CD8-positive, alpha-beta T cell (primary cell): ENCODE measurements at regions of chr19 and their contacts with region 1.

Region 1: GRCh38 chr19:7925171-7925851 is 624 bp downstream of the CTXN1 start:
- DNase-seq: peak; percentile 60 to 90 (median 84)
- ATAC-seq: peak; percentile 21
- H3K4me3 ChIP-seq: no peak overlapping the region
- H3K4me3 Mint-ChIP-seq: peak overlapping the region; percentile 77
- H3K27ac ChIP-seq: no peak overlapping the region
- H3K27ac Mint-ChIP-seq: peak overlapping the region; percentile 45
- H3K4me1 ChIP-seq: peaks cover 24% of the 10 kb centered on the region
- H3K4me1 Mint-ChIP-seq: peaks cover 32% of the 10 kb centered on the region
- H3K27me3 ChIP-seq: no peaks in the 10 kb centered on the region
- H3K27me3 Mint-ChIP-seq: no peaks in the 10 kb centered on the region
- CTCF ChIP-seq: peak; percentile 73

Region 2: GRCh38 chr19:7783991-7784421 is 141.3 kb before region 1 on chr19:
- CTCF ChIA-PET with region 1: no interaction called
- POLR2A ChIA-PET with region 1: no interaction called
- intact Hi-C with region 1: no loop called
- DNase-seq: peak in 1 of 9 experiments; percentile 21
- ATAC-seq: no peak
- H3K4me3 ChIP-seq: no peak overlapping the region
- H3K4me3 Mint-ChIP-seq: no peak overlapping the region
- H3K27ac ChIP-seq: no peak overlapping the region
- H3K27ac Mint-ChIP-seq: no peak overlapping the region
- H3K4me1 ChIP-seq: peaks cover 4% of the 10 kb centered on the region
- H3K4me1 Mint-ChIP-seq: peaks cover 3% of the 10 kb centered on the region
- H3K27me3 ChIP-seq: peaks cover 9 to 13% of the 10 kb centered on the region in 2 experiments
- H3K27me3 Mint-ChIP-seq: peaks cover 28% of the 10 kb centered on the region
- CTCF ChIP-seq: no peak

Region 3: DNA sequence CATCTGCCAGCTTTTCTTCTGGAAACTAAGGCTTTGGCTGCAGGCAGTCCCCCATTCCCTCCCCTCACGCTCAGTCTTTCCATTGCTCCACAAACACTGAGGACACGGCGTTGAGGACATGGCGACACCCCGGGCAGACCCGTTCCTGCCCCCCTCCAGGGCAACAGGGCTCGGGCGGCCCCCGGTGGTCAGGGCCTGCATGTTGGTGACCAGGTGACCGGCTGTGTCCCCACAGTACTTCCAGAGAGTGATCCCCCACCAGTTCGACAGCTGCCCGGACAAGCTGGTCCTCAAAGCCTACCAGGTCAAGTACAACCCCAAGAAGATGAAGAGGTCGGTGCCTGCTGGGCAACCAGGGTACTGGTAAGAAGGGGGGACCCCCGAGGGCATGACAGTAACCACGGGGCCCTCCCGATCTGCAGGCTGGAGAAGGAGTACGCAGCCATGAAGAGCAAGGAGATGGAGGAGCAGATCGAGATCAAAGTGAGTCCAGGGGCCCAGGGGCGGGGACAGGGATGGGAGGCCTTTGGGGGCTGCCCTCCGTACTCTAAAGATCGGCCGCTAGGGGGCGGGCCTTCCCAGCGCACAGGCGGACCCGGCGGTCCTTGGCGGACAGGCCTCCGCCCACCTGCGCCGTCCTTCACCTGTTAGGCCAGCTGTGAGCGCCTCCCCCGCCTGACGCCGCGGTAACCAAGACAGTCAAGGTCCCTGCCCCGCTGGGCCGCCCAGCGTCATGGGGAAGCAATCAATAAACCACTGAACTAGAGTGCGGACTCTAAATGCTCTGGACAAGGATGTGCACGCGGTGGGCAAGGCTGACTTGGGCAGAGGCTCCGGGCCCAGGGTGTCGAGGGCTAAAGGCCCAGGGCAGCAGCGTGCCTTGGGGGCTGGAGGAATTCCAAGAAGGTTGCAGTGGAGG is 72.2 kb before region 1 on chr19:
- CTCF ChIA-PET with region 1: interaction called, 14 read pairs
- POLR2A ChIA-PET with region 1: interaction called, 3 read pairs
- intact Hi-C with region 1: loop called (anchors 1 kb)
- DNase-seq: peak; percentile 37 to 80 (median 69)
- ATAC-seq: peak; percentile 84
- H3K4me3 ChIP-seq: no peak overlapping the region
- H3K4me3 Mint-ChIP-seq: no peak overlapping the region
- H3K27ac ChIP-seq: no peak overlapping the region
- H3K27ac Mint-ChIP-seq: no peak overlapping the region
- H3K4me1 ChIP-seq: peaks cover 5% of the 10 kb centered on the region
- H3K4me1 Mint-ChIP-seq: peaks cover 2% of the 10 kb centered on the region
- H3K27me3 ChIP-seq: peaks cover 0 to 10% of the 10 kb centered on the region in 2 experiments
- H3K27me3 Mint-ChIP-seq: peaks cover 2% of the 10 kb centered on the region
- CTCF ChIP-seq: peak; percentile 85

Region 4: GRCh38 chr19:7903244-7904073 is 21.9 kb before region 1 on chr19 and contains the start of gene MAP2K7:
- CTCF ChIA-PET with region 1: interaction called, 8 read pairs
- POLR2A ChIA-PET with region 1: interaction called, 24 read pairs
- intact Hi-C with region 1: loop called (anchors 1 kb)
- DNase-seq: peak; percentile 99 to 100 (median 100)
- ATAC-seq: peak; percentile 81
- H3K4me3 ChIP-seq: peak within 1 kb of the TSS; percentile 59 to 87
- H3K4me3 Mint-ChIP-seq: peak within 1 kb of the TSS; percentile 91
- H3K27ac ChIP-seq: peak within 1 kb of the TSS; percentile 65 to 84
- H3K27ac Mint-ChIP-seq: peak within 1 kb of the TSS; percentile 96
- H3K4me1 ChIP-seq: peaks cover 30% of the 10 kb centered on the region
- H3K4me1 Mint-ChIP-seq: peaks cover 23% of the 10 kb centered on the region
- H3K27me3 ChIP-seq: no peaks in the 10 kb centered on the region
- H3K27me3 Mint-ChIP-seq: no peaks in the 10 kb centered on the region
- CTCF ChIP-seq: peak; percentile 59
- total RNA-seq, gene MAP2K7: 127 to 135 TPM

Region 5: DNA sequence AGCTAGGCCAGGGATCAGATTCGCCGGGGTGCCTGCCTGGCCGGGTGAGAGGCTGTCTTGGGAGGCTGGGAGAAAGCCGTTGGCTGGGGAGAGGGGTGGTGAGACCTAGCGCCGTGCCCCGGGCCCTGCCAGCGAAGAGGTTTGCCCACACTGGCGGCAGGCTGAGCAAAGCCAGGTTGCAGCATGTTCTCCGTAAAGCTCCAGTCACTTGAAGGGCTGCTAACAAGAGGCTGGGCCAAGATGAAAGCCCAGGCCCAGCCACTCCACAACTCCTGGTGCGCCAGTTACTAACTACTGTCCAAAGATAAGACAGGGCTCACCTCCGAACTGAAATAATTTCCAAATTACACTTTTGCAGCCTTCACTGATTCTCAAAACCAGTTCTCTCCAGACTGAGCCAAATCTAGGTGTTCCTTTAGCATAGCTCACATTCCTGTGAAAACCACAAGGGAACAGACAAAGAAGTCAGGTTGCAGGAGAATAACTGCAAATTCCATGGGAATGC is 63.8 kb after region 1 on chr19:
- CTCF ChIA-PET with region 1: no interaction called
- POLR2A ChIA-PET with region 1: no interaction called
- intact Hi-C with region 1: no loop called
- DNase-seq: no peak
- ATAC-seq: no peak
- H3K4me3 ChIP-seq: no peak overlapping the region
- H3K4me3 Mint-ChIP-seq: no peak overlapping the region
- H3K27ac ChIP-seq: no peak overlapping the region
- H3K27ac Mint-ChIP-seq: no peak overlapping the region
- H3K4me1 ChIP-seq: no peaks in the 10 kb centered on the region
- H3K4me1 Mint-ChIP-seq: peaks cover 16% of the 10 kb centered on the region
- H3K27me3 ChIP-seq: no peaks in the 10 kb centered on the region
- H3K27me3 Mint-ChIP-seq: no peaks in the 10 kb centered on the region
- CTCF ChIP-seq: no peak